ENCODE measurements at regions of chr5 and their contacts with region 1.

Region 1: DNA sequence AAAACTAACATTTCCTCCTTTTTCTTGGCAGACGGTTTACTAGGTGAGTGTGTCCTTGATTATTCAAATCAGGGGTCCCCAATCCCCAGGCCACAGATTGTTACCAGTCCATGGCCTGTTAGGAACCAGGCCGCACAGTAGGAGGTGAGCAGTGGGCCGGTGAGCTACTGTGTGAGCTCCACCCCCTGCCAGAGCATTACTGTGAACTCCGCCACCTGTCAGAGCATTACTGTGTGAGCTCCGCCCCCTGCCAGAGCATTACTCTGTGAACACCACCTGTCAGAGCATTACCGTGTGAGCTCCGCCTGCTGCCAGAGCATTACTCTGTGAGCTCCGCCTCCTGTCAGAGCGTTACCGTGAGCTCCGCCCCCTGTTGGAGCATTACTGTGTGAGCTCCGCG is 14.3 kb upstream of the PDCD6 start:
- DNase-seq: no peak
- ATAC-seq: no peak
- H3K4me3 ChIP-seq: no peak overlapping the region
- H3K27ac ChIP-seq: no peak overlapping the region
- H3K4me1 ChIP-seq: no peaks in the 10 kb centered on the region
- H3K27me3 ChIP-seq: no peaks in the 10 kb centered on the region; a peak in 1 of 5 replicates
- CTCF ChIP-seq: no peak
- EP300 ChIP-seq: no peak
- POLR2A ChIP-seq: no peak
- RAD21 ChIP-seq: no peak

Region 2: DNA sequence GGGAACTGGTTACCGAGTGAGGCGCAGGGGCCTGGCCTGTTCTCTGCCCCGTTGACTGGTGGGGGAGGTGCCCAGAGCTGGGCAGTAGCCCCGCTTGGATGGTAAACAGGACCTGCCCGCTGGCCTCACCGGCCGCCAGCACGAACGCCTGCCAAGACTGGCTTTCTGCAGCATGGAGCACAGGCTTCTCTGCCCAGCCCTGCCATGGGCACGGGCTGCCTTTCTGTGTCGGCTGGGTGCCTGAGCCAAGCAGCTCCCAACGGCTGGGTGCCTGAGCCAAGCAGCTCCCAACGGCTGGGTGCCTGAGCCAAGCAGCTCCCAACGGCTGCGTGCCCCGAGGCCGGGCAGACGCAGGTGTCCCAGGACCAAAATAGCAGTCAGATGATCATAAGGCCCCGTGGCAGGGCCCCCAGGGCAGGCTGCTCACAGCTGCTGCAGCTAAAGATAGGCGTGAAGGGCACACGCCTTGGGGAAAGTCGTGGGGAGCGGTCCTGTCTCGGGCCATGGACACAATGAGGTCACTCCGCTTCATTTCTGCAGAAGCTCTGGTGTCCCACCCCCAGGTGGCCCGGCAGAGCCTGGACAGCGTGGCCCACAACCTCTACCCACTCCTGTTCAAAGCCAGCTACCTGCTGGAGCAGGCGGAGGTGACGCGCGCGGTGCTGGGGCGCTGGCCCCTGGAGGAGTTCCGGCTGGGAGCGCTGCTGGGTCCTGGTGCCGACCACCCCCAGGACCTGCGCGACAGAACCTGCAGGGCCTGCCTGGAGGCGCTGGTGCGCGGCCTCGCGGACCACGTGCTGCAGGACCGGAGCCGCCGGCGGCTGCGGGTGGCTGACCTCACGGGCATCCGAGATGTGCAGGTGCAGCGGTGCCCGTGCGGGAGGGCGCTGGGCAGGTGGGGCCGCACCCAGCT is 65.9 kb before region 1 on chr5 and contains the start of gene LRRC14B:
- CTCF ChIA-PET with region 1: no interaction called
- POLR2A ChIA-PET with region 1: no interaction called
- in situ Hi-C with region 1: no loop called
- intact Hi-C with region 1: no loop called
- DNase-seq: no peak
- ATAC-seq: no peak
- H3K4me3 ChIP-seq: no peak within 1 kb of the TSS
- H3K27ac ChIP-seq: no peak within 1 kb of the TSS
- H3K4me1 ChIP-seq: peaks cover 23% of the 10 kb centered on the region
- H3K27me3 ChIP-seq: peaks cover 0 to 9% of the 10 kb centered on the region in 2 experiments; a peak in 1 of 5 replicates
- CTCF ChIP-seq: no peak
- EP300 ChIP-seq: no peak
- POLR2A ChIP-seq: no peak
- RAD21 ChIP-seq: no peak
- total RNA-seq, gene LRRC14B: not detected in 2 replicates

Region 3: DNA sequence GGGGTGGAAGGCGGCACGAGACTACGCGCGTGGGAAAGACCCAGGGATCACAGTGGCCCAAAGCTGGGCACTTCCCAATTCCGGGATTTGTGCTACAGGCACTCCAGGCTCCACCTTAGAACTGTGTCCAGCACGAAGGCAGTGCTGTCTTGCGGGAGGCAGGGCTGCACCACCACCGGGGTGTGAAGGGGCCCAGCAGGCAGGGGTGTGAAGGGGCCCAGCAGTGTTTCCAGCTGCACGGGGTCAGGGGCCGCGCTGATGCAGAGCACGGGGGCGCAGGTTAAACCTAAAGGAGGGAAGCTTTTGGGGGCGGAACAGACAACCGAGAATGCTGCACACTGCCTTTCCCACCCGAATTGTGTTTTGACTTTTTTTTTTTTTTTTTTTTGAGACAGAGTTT is 13.2 kb after region 1 on chr5:
- CTCF ChIA-PET with region 1: no interaction called
- POLR2A ChIA-PET with region 1: interaction called, 13 read pairs
- in situ Hi-C with region 1: no loop called
- intact Hi-C with region 1: no loop called
- DNase-seq: no peak
- ATAC-seq: no peak
- H3K4me3 ChIP-seq: peak overlapping the region in 1 of 3 experiments; percentile 71; a peak in 1 of 6 replicates
- H3K27ac ChIP-seq: peak overlapping the region; percentile 66
- H3K4me1 ChIP-seq: peaks cover 23% of the 10 kb centered on the region
- H3K27me3 ChIP-seq: no peaks in the 10 kb centered on the region
- CTCF ChIP-seq: no peak
- EP300 ChIP-seq: no peak
- POLR2A ChIP-seq: no peak
- RAD21 ChIP-seq: no peak

Region 4: DNA sequence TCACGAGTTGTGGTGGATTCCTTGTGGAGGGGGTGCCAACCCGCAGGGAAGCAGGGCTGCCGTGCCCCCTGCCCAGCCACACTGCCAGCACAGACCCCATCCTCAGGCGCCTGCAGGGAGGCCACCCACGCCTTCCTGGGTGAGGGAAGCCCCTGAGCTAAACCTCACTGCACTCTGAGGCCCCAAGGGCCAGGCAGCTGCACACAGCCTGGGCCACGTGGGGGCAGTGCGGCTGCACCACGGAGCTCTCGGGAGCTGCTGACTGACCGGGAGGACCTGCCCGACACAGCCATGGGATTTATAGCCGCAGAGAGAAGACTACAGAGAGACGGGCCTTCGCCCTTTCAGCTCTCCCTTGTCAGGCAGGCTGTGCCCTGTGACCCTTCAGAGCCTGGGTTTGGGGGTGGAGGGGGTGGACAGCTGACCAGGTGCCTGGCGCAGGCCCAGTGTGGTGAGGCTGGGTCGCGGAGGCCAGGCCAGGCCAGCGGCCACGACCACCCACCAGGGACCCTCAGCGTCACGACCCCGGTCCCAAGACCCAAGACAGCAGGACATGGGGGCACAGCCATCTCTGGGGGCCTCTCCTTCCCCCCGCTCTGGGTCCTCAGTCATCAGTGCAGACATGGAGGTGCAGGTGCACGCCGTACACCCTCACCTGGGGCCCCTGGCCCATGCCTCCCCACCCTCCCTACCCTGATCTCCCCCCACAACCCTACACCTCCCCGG is 60.1 kb after region 1 on chr5:
- CTCF ChIA-PET with region 1: no interaction called
- POLR2A ChIA-PET with region 1: no interaction called
- in situ Hi-C with region 1: no loop called
- intact Hi-C with region 1: no loop called
- DNase-seq: peak; percentile 53
- ATAC-seq: peak; percentile 87
- H3K4me3 ChIP-seq: no peak overlapping the region
- H3K27ac ChIP-seq: no peak overlapping the region
- H3K4me1 ChIP-seq: peaks cover 19% of the 10 kb centered on the region
- H3K27me3 ChIP-seq: peaks cover 2 to 22% of the 10 kb centered on the region in 2 experiments; a peak in 4 of 5 replicates
- CTCF ChIP-seq: peak; percentile 93
- EP300 ChIP-seq: no peak
- POLR2A ChIP-seq: no peak
- RAD21 ChIP-seq: peak; percentile 89